ENCODE measurements at regions of chr13 and their contacts with region 1.

Region 1: DNA sequence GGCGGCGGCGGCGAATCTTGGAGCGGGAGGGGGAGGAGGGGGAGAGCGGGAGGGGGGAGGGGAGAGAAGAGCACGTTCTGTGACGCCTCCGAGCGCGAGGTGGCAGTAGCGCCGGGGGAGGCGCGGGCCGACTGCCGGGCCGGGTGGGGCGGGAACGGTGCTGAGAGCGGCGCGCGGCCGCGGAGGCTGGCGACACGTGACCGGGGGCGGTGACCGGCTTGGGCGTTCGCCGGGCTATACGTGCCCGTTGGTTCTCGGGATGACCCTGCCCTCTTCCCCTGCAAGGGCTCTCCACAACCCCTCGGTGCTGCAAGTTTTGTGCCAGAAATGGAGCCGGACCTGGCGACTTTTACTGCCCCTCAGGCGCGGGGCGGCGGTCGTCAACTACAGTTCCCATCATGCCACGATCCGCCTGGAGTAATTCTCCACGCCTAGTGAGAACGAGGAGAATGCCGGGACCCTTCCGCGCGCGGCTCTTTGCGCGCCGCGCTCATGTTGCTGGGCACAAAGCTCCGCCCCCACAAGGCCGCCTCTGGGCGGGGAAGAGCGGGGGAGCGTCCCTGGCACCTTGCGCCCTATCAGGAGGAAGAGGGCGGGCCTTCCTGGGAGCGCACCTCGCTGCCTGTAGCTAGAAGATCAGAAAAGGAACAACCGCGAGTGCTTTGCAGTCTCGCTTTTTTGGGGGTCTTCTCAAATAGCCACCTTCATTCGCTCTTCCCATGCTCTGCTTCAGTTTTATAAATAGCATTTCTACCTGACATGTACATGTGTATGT is at the start of gene KPNA3:
- DNase-seq: peak; percentile 96
- ATAC-seq: peak; percentile 92
- H3K4me3 ChIP-seq: peak within 1 kb of the TSS; percentile 87
- H3K27ac ChIP-seq: peak within 1 kb of the TSS; percentile 99
- H3K4me1 ChIP-seq: peaks cover 2% of the 10 kb centered on the region
- H3K27me3 ChIP-seq: no peaks in the 10 kb centered on the region
- CTCF ChIP-seq: no peak
- POLR2A ChIP-seq: no peak
- RAD21 ChIP-seq: no peak
- total RNA-seq, gene KPNA3: 48.6 and 63.6 TPM in 2 replicates

Region 2: DNA sequence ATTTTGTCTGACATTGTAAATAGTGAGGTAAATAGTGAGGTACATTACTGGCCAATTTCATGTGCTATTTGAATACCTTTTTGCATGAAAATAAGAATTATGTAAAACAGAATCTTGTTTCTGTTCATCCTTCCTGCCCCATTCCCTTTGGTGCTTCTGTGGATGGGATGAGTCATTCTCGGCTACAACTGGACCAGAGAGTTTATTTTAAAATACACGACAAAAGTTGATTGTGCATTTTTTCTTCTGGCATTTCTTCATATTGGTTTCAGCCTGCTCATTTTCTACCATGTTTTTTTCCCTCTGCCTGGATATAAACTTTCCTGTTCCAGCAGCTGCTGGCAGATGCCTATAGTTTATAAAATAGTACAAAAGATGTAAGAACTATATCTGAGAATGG is 1031.5 kb before region 1 on chr13:
- CTCF ChIA-PET with region 1: no interaction called
- POLR2A ChIA-PET with region 1: no interaction called
- dilution Hi-C with region 1: no loop called
- in situ Hi-C with region 1: no loop called
- intact Hi-C with region 1: no loop called
- DNase-seq: peak; percentile 58
- ATAC-seq: peak; percentile 77
- H3K4me3 ChIP-seq: no peak overlapping the region
- H3K27ac ChIP-seq: no peak overlapping the region
- H3K4me1 ChIP-seq: no peaks in the 10 kb centered on the region; the same call in 1 of the 2 replicates
- H3K27me3 ChIP-seq: no peaks in the 10 kb centered on the region
- CTCF ChIP-seq: no peak
- POLR2A ChIP-seq: no peak
- RAD21 ChIP-seq: no peak

Region 3: GRCh38 chr13:49690992-49691886 is 101.5 kb before region 1 on chr13 and contains the start of gene EBPL:
- CTCF ChIA-PET with region 1: no interaction called
- POLR2A ChIA-PET with region 1: no interaction called
- dilution Hi-C with region 1: no loop called
- in situ Hi-C with region 1: no loop called
- intact Hi-C with region 1: loop called (anchors 2 kb)
- DNase-seq: peak; percentile 86
- ATAC-seq: peak; percentile 99
- H3K4me3 ChIP-seq: peak within 1 kb of the TSS; percentile 56
- H3K27ac ChIP-seq: peak within 1 kb of the TSS; percentile 67
- H3K4me1 ChIP-seq: 0 out of 2 replicates have a peak, but pooled peaks cover 1% of the 10 kb centered on the region
- H3K27me3 ChIP-seq: no peaks in the 10 kb centered on the region
- CTCF ChIP-seq: no peak
- POLR2A ChIP-seq: no peak
- RAD21 ChIP-seq: no peak
- total RNA-seq, gene EBPL: 57.9 and 78.6 TPM in 2 replicates

Region 4: DNA sequence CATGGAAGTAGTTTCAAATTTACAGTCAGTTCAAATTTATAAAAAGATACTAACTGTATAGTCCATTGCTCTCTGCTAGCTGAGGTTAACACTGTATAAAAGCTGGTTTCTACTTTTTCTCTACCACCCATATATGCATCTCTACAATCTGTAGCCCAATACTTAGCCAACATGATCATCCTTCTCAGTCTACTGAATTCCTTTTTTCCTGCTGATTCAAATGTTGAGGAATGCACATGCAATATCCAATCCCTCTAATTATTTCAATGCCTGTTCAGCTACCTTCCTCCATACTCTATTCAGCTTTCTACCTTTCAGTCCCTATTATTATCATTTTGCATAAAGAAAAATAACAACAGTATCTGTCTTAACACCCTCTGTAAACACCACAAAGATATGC is 15.9 kb before region 1 on chr13:
- CTCF ChIA-PET with region 1: interaction called, 5 read pairs
- POLR2A ChIA-PET with region 1: interaction called, 16 read pairs
- dilution Hi-C with region 1: no loop called
- in situ Hi-C with region 1: no loop called
- intact Hi-C with region 1: loop called (anchors 2 kb)
- DNase-seq: peak; percentile 43
- ATAC-seq: peak; percentile 87
- H3K4me3 ChIP-seq: no peak overlapping the region
- H3K27ac ChIP-seq: no peak overlapping the region
- H3K4me1 ChIP-seq: peaks cover 5% of the 10 kb centered on the region
- H3K27me3 ChIP-seq: no peaks in the 10 kb centered on the region
- CTCF ChIP-seq: no peak
- POLR2A ChIP-seq: no peak
- RAD21 ChIP-seq: no peak

Region 5: DNA sequence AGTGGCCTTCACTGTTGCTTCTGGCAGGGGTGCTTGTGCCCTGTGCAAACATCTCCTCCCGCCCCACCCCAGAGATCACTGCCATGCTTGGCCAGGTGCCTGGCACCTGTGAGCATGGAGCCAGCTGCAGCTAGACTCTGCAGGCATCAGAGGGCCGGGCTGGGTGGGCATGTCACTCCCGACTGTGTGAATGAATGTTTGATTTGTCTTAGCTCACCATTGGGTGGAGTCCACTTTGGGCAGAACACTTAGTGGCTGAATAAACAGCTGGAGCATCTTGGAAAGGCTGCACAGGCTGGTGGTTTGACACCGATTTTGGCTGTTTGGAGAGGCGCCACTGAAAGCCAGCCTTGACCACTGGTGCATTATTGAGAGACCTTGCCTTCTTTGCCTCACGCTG is 783.4 kb after region 1 on chr13:
- CTCF ChIA-PET with region 1: no interaction called
- POLR2A ChIA-PET with region 1: no interaction called
- dilution Hi-C with region 1: no loop called
- in situ Hi-C with region 1: no loop called
- intact Hi-C with region 1: no loop called
- DNase-seq: no peak
- ATAC-seq: no peak
- H3K4me3 ChIP-seq: no peak overlapping the region
- H3K27ac ChIP-seq: no peak overlapping the region
- H3K4me1 ChIP-seq: no peaks in the 10 kb centered on the region
- H3K27me3 ChIP-seq: peaks cover 17% of the 10 kb centered on the region
- CTCF ChIP-seq: no peak
- POLR2A ChIP-seq: no peak
- RAD21 ChIP-seq: no peak